ENCODE measurements at regions of chr2 and their contacts with region 1.

Region 1: DNA sequence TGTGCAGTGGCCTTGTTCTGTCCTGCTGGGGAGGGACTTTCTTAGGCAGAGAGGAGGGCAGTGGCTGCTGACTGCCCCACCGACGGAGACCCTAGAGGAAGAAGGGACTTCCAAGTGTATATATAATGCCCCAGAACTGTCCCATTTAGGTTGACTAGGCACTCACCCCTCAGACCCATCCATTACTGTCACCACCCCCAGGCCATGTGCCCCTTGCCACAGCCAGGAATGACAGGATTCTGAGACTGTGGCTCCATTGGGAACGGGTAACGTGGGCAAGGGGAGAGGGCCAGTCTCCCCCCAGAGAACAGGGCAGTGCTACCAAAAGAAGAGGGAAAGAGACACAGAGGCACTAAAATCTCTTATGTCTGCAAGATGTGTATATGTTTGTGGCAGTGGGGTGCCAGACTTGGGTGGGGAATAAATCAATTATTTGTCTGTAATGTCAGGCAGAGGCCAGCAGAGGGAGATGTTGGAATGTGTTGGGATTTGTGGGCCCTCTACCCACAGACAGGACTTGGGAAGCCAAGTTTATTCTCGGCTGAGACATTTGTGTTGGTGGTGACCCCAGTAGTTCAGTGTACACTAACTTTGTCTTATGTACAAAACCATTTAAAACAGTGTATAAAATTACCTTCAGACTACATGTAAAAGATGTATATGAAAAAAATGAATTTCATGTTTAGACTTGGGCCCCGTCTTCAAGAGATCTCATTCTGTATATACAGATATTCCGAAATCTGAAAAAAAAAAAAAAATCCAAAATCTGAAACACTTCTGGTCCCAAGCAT is 24.0 kb upstream of the TMEM37 start:
- DNase-seq: no peak
- ATAC-seq: peak; percentile 79 to 81

Region 2: GRCh38 chr2:119198240-119198840 is 209.3 kb before region 1 on chr2:
- intact Hi-C with region 1: no loop called
- DNase-seq: no peak
- ATAC-seq: peak; percentile 38 to 71

Region 3: DNA sequence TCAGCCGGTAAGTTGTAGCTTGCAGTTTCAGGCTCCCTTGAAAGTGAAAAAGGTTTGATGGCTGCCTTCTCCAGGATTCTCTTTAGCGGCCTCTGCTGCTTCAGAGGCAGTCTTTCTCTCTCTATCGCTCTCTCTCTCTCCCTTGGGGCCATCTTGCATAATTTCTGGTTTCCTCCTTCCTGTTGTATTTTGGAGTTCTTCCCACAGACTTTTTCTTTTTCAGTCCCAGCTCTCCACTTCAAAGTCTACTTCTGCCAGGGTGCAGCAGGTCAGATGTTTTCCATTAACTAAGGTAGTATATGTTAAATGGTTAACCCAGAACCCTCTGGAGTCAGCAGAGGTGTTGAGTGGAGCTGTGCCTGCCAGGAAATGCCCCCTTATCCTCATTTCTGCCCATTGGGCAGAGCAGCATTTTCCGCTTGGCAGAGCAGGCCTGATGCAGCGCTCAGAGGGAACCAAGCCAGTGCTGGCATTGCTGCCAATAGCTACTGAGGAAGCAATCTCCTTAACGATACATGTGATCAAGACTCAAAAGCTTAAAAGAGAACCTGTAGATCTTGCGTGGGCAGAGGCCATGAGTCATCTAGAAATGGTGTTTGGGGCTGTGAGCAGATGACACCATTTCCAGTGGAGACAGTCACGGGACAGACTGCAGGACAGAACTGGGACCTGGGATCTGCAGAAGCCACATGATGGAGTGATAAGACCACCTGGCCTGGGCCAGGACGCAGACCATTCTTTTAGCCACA is 20.1 kb before region 1 on chr2:
- intact Hi-C with region 1: no loop called
- DNase-seq: peak; percentile 78
- ATAC-seq: peak; percentile 86

Region 4: DNA sequence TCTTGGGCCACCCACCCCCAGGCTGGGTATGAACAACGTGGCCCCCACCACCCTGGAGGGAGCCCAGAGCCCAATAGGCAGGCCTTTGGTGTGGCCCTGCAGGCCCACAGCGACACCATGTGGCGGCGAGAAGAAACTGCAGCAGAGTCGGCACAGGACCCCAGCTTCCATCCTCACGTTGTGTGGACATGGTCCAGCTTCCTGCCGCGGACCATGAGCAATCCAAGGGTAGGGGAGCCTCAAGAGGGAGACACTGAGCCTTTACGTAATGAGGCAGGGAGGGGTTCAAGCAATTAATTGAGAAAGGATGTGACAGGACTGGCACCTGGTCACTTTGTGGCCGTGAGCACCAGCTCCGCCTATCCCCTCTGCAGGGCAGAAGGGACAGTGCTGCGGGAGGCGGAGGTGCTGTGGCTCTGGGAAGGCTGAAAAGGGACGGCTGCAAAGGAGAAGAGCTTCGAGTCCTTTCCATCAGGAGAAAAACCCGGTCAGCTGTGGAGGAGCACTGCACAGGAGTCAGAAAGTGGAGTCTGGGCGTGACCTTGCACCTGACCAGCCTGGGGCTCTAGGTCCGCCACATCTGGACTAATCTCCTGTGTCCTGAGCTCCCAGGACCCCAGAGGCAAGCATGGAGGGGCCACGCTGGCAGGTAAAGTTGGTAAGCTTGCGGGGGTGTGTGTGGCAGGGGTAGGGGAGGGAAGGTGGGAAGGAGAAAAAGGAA is 68.8 kb after region 1 on chr2:
- intact Hi-C with region 1: loop called (anchors 1 to 5 kb)
- DNase-seq: peak; percentile 52
- ATAC-seq: peak; percentile 73 to 83

Region 5: GRCh38 chr2:119659601-119660342 is 252.1 kb after region 1 on chr2:
- intact Hi-C with region 1: loop called (anchors 5 kb)
- DNase-seq: peak; percentile 47
- ATAC-seq: no peak